ENCODE measurements at regions of chr1 and their contacts with region 1.

Region 1: GRCh38 chr1:222465211-222466041 is 82.5 kb downstream of the HHIPL2 start:
- DNase-seq: peak; percentile 85
- ATAC-seq: peak; percentile 98
- H3K4me3 ChIP-seq: peak overlapping the region; percentile 28 to 43
- H3K27ac ChIP-seq: peak overlapping the region; percentile 44
- H3K4me1 ChIP-seq: peaks cover 2 to 12% of the 10 kb centered on the region in 2 experiments; a peak in 3 of 4 replicates
- H3K27me3 ChIP-seq: no peaks in the 10 kb centered on the region
- CTCF ChIP-seq: peak; percentile 94 to 98 (median 96)
- POLR2A ChIP-seq: no peak
- RAD21 ChIP-seq: peak; percentile 98

Region 2: GRCh38 chr1:221809031-221810029 is 656.1 kb before region 1 on chr1:
- CTCF ChIA-PET with region 1: no interaction called
- POLR2A ChIA-PET with region 1: no interaction called
- RAD21 ChIA-PET with region 1: no interaction called
- intact Hi-C with region 1: no loop called
- DNase-seq: no peak
- ATAC-seq: no peak
- H3K4me3 ChIP-seq: no peak overlapping the region
- H3K27ac ChIP-seq: no peak overlapping the region
- H3K4me1 ChIP-seq: peaks cover 0 to 9% of the 10 kb centered on the region in 2 experiments; a peak in 1 of 4 replicates
- H3K27me3 ChIP-seq: no peaks in the 10 kb centered on the region
- CTCF ChIP-seq: no peak
- POLR2A ChIP-seq: no peak
- RAD21 ChIP-seq: no peak

Region 3: DNA sequence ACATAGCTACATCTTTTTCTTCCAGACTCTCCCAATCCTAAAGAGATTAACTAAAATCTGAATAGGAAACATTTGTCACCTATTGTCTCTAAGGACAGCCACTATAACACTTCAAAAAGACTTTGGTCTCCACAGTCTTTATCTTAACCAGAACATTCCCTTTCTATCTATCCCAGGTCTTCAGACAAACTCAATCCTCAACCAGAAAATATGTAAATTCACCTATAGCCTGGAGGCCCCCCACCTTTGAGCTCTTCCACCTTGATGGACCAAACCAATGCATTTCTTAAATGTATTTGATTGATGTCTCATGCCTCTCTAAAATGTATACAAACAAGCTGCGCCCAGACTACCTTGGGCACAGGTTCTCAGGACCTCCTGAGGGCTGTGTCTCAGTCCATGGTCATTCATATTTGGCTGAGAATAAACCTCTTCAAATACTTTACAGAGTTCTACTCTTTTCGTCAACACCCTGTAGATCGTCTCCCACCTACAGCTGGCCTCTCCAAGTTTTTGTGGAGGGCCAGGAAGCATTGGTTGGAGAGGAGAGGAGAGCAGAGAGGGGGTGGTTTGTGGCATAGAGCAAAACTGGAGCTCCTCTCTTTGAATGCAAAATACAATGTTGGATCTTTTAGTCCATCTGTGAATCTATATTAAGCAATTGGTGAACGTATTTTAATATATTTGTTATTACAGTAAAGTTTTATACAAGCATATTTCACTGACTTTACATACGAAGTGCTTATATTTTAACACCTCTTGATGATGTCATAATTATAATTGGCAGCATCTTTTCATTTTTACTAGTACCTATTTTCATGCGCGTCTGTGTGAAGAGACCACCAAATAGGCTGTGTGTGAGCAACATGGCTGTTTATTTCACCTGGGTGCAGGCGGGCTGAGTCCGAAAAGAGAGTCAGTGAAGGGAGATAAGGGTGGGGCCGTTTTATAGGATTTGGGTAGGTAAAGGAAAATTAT is 492.9 kb before region 1 on chr1:
- CTCF ChIA-PET with region 1: no interaction called
- POLR2A ChIA-PET with region 1: no interaction called
- RAD21 ChIA-PET with region 1: no interaction called
- intact Hi-C with region 1: no loop called
- DNase-seq: no peak
- ATAC-seq: no peak
- H3K4me3 ChIP-seq: no peak overlapping the region
- H3K27ac ChIP-seq: no peak overlapping the region
- H3K4me1 ChIP-seq: no peaks in the 10 kb centered on the region
- H3K27me3 ChIP-seq: no peaks in the 10 kb centered on the region
- CTCF ChIP-seq: no peak
- POLR2A ChIP-seq: no peak
- RAD21 ChIP-seq: no peak

Region 4: DNA sequence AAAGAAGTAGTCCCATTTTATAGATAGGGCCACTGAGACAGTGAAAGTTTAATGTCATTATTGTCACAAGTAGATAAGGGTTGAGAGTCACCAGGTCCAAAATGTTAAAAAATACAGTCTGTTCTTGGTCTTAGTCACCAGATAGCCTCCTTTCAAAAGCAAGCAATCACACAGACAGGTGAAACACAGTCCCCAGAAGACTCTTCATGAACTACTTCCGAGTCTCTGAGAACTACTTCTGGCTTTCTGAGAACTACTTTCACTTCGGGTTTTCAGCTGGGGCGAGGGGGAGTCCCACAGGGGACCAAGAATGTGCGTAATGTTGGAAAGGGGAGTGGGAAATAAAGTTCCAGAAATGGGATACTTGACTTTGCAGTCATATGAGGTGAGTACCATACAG is 60.7 kb before region 1 on chr1:
- CTCF ChIA-PET with region 1: no interaction called
- POLR2A ChIA-PET with region 1: no interaction called
- RAD21 ChIA-PET with region 1: no interaction called
- intact Hi-C with region 1: no loop called
- DNase-seq: no peak
- ATAC-seq: no peak
- H3K4me3 ChIP-seq: no peak overlapping the region
- H3K27ac ChIP-seq: no peak overlapping the region
- H3K4me1 ChIP-seq: no peaks in the 10 kb centered on the region
- H3K27me3 ChIP-seq: 0 out of 2 replicates have a peak, but pooled peaks cover 9% of the 10 kb centered on the region
- CTCF ChIP-seq: no peak
- POLR2A ChIP-seq: no peak
- RAD21 ChIP-seq: no peak

Region 5: GRCh38 chr1:222634180-222635013 is 169.0 kb after region 1 on chr1:
- CTCF ChIA-PET with region 1: interaction called, 36 read pairs
- POLR2A ChIA-PET with region 1: interaction called, 7 read pairs
- RAD21 ChIA-PET with region 1: interaction called in 1 of 2 experiments, 7 read pairs
- intact Hi-C with region 1: no loop called
- DNase-seq: peak; percentile 85
- ATAC-seq: peak; percentile 81
- H3K4me3 ChIP-seq: no peak overlapping the region
- H3K27ac ChIP-seq: no peak overlapping the region
- H3K4me1 ChIP-seq: no peaks in the 10 kb centered on the region
- H3K27me3 ChIP-seq: no peaks in the 10 kb centered on the region
- CTCF ChIP-seq: peak; percentile 79 to 89 (median 85)
- POLR2A ChIP-seq: no peak
- RAD21 ChIP-seq: peak; percentile 83

Region 6: DNA sequence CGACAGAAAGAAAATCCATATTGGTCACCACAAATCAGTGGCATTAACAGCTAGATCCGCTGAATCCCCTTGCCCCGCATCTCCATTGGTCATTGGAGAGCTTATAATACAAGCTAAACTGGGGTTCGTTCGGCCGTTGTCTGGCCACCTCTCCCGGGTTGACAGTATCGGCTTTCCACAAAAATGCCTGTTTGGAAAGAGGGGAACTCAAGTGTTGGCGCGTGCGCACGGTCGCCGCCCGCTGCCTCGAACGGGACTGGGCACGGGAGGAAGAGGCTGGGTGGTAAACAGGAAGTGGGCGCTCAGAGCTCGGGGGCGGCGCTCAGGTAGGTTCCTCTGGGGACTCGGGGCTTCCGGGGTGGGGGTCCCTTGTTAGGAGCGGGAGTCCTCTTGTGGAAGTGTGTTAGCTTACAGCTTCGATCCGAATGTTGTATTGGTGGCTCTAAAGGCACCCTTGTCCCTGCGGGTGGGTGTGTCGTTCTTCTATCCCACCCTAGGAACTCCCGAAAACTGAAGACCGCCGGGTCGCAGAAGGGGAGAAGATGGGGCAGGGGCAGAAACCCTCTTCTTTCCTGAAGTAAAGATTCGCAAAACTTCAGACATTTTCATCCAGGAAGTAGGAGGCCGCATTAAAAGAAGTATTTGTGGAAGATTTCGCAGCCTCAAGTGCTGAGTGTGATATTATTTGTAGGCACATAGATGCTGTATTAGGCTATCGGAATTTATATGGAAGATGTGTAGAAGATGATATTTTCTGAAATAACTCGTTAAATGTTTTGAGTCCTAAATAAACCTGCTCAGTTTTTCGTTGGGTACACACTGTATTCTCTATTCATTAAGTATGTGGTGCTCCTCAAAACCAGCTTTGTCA is 247.9 kb after region 1 on chr1:
- CTCF ChIA-PET with region 1: interaction called, 3 read pairs
- POLR2A ChIA-PET with region 1: interaction called, 4 read pairs
- RAD21 ChIA-PET with region 1: no interaction called
- intact Hi-C with region 1: loop called (anchors 1 kb)
- DNase-seq: peak; percentile 90
- ATAC-seq: peak; percentile 75
- H3K4me3 ChIP-seq: peak overlapping the region; percentile 73 to 96
- H3K27ac ChIP-seq: peak overlapping the region; percentile 84
- H3K4me1 ChIP-seq: peaks cover 0 to 12% of the 10 kb centered on the region in 2 experiments; a peak in 2 of 4 replicates
- H3K27me3 ChIP-seq: no peaks in the 10 kb centered on the region
- CTCF ChIP-seq: no peak
- POLR2A ChIP-seq: peak; percentile 82
- RAD21 ChIP-seq: no peak

Region 7: GRCh38 chr1:222792744-222793143 is 327.3 kb after region 1 on chr1:
- CTCF ChIA-PET with region 1: no interaction called
- POLR2A ChIA-PET with region 1: no interaction called
- RAD21 ChIA-PET with region 1: no interaction called
- intact Hi-C with region 1: loop called (anchors 5 kb)
- DNase-seq: no peak
- ATAC-seq: peak; percentile 70
- H3K4me3 ChIP-seq: no peak overlapping the region
- H3K27ac ChIP-seq: no peak overlapping the region
- H3K4me1 ChIP-seq: no peaks in the 10 kb centered on the region
- H3K27me3 ChIP-seq: no peaks in the 10 kb centered on the region
- CTCF ChIP-seq: peak; percentile 29 to 88 (median 76); a peak in 5 of 6 replicates
- POLR2A ChIP-seq: no peak
- RAD21 ChIP-seq: peak; percentile 90

Region 8: DNA sequence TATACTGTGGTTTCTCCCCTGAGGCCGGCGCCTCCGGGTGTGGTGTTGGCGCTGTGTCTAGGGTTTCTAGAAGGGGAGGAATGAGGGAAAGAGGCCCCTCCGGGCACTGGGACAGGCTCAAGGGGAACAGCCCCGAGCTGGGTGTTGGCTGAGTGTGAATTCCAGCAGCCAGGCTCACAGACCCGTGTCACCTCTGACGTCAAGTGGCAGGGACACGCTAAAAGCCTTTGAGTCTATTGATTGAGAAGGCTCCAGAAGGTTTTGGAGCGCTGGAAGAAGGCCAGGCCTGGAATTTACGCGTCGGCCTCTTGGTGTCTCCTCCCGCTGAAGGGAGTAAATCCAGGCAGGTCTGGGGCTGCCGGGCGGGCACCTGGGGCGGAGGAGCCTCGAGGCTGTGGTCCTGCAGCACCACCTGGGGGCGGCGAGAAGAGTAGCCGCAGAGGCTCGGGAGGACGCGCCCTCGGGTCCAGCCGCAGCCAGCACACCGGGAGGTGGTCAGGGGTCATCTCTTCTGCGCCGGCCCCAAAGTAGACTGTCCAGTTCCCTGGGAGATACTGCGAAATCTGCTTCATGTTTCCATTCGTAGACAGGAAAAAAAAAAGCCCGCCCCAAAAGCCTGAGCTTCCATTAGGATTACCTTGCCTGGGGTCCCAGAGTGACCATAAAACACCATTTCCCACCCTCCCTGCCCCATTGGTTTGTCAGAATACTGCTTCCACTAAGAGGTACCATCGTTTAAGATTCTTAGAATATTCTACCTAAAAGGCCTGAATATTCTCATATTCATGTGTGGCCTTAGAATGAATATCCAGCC is 616.0 kb after region 1 on chr1:
- CTCF ChIA-PET with region 1: no interaction called
- POLR2A ChIA-PET with region 1: no interaction called
- RAD21 ChIA-PET with region 1: no interaction called
- intact Hi-C with region 1: loop called (anchors 1 kb)
- DNase-seq: peak; percentile 97
- ATAC-seq: peak; percentile 99
- H3K4me3 ChIP-seq: peak overlapping the region in 1 of 2 experiments; percentile 21; a peak in 1 of 4 replicates
- H3K27ac ChIP-seq: peak overlapping the region; percentile 55
- H3K4me1 ChIP-seq: peaks cover 0 to 5% of the 10 kb centered on the region in 2 experiments; a peak in 2 of 4 replicates
- H3K27me3 ChIP-seq: no peaks in the 10 kb centered on the region
- CTCF ChIP-seq: peak; percentile 90 to 98 (median 91)
- POLR2A ChIP-seq: no peak
- RAD21 ChIP-seq: peak; percentile 100

Region 9: DNA sequence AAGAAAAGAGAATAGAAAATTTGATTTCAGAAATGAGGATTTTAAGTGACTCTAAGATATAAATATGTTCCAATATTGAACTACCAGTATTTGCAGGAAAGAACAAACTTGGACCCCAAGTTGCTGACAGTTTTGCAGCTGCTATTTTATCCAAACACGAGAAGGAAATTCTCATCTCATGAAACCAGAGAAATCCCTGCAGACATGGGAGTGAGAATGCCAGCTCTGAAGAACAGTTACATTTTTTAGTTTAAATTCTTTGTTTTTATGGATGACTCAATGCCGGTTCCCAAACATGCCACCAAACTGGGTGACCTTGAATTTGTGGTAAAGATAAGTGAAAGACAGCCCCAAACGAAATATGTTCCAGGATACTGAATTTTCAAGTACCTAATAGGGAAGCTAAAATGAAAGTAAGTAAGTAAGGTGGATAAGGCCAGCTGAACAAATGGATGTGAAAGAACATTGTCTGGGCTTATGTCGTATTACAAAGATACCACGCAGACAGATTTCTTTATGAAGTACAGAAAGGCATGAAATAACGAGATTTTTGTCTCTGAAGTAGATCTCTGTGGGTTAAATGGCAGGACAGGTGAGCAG is 657.7 kb after region 1 on chr1:
- CTCF ChIA-PET with region 1: interaction called, 10 read pairs
- POLR2A ChIA-PET with region 1: no interaction called
- RAD21 ChIA-PET with region 1: no interaction called
- intact Hi-C with region 1: loop called (anchors 1 kb)
- DNase-seq: no peak
- ATAC-seq: peak; percentile 16; the same call in 1 of the 2 replicates
- H3K4me3 ChIP-seq: peak overlapping the region; percentile 42 to 48
- H3K27ac ChIP-seq: no peak overlapping the region
- H3K4me1 ChIP-seq: peaks cover 4 to 20% of the 10 kb centered on the region in 2 experiments; a peak in 3 of 4 replicates
- H3K27me3 ChIP-seq: no peaks in the 10 kb centered on the region
- CTCF ChIP-seq: no peak
- POLR2A ChIP-seq: no peak
- RAD21 ChIP-seq: no peak